Left colon (tissue), 2 donors: ENCODE measurements at regions of chr16 and their contacts with region 1.

Region 1: GRCh38 chr16:81204798-81205680 is 33.5 kb upstream of the BCO1 start:
- DNase-seq: peak in 1 of 2 donors; percentile 9
- ATAC-seq: peak; percentile 42

Region 2: DNA sequence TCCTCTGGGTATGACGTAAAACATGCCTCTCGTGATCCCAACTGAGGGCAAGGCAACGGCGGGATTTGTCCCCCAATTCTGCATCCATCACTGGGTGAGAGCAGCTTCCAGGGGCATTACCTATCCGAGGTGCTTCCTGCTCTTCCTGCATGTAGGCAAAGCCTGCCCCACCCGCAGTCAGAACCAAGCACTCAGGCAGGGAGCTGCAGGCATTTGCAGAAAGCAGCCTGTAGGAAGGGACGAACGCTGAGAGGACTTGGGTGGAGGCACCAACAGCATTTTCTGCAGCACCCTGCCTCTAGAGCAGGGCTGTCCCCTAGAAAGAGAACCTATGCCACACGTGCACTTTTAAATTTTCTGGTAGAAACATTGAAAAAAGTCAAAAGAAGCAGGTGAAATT is 38.9 kb after region 1 on chr16:
- intact Hi-C with region 1: no loop called
- DNase-seq: peak in 1 of 2 donors; percentile 25
- ATAC-seq: peak; percentile 84

Region 3: DNA sequence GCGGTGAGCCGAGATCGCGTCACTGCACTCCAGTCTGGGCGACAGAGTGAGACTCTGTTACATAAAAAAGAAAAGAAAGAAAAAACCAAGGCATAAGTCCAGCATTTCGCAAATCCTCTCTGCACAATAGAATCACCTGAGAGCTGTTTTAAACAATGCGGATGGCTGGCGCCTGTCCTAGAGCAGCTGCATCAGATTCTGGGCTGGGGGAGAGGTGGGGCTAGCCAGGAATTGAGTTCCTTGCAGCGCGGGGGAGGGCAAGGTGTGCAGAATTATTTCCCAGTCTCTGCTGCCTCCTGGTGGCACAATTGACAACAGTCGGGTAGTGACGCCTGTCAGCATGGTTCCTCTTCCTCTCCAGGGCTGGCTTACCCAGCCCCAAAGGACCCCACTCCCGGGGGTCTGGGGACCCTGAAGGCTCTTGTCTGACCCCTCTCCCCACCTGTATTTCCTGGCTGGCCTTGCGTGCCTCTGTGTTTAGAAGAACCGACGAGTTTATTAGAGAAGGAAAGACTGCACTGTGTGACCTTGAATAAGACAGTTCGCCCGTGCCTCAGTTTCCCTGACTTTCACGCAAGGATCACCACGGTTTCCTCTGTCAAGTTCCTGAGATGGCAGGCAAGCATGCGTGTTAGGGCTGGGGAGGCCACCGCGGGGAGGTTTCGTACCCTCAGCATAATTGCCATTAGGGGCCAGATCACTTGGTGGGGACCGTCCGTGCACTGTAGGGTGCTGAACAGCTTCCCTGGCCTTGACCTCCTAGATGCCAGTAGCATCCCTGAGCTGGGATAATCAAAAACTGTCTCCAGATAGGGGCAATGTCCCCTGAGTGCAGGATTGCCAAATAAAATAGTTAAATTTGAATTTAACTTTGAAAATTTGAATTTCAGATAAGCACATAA is 533.1 kb after region 1 on chr16:
- intact Hi-C with region 1: loop called in 1 of 2 experiments (anchors 10 kb)
- DNase-seq: peak; percentile 85 to 93
- ATAC-seq: peak; percentile 97